Aorta (tissue), 5 donors: ENCODE measurements at regions of chr5 and their contacts with region 1.

Region 1: GRCh38 chr5:10563945-10564837 is at the start of gene ANKRD33B:
- DNase-seq: peak; percentile 77 to 90
- ATAC-seq: peak; percentile 70
- H3K4me3 ChIP-seq: peak within 1 kb of the TSS; percentile 72 to 86
- H3K27ac ChIP-seq: no peak within 1 kb of the TSS
- H3K4me1 ChIP-seq: no peaks in the 10 kb centered on the region
- H3K27me3 ChIP-seq: no peaks in the 10 kb centered on the region
- total RNA-seq, gene ANKRD33B: 3.3 to 4.9 TPM

Region 2: GRCh38 chr5:10595678-10596309 is 31.6 kb after region 1 on chr5:
- intact Hi-C with region 1: loop called in 1 of 2 experiments (anchors 2 kb)
- DNase-seq: no peak
- ATAC-seq: peak; percentile 91
- H3K4me3 ChIP-seq: no peak overlapping the region
- H3K27ac ChIP-seq: peak overlapping the region in 1 of 2 donors; percentile 58
- H3K4me1 ChIP-seq: no peaks in the 10 kb centered on the region
- H3K27me3 ChIP-seq: no peaks in the 10 kb centered on the region